OCI-LY7 (cell line): ENCODE measurements at regions of chr7 and their contacts with region 1.

Region 1: GRCh38 chr7:130069978-130070860 is at the start of gene KLHDC10:
- DNase-seq: peak; percentile 97
- H3K4me3 ChIP-seq: peak within 1 kb of the TSS; percentile 83
- H3K27ac ChIP-seq: peak within 1 kb of the TSS; percentile 19
- H3K4me1 ChIP-seq: peaks cover 15% of the 10 kb centered on the region
- CTCF ChIP-seq: no peak
- total RNA-seq, gene KLHDC10: 15.9 and 24.1 TPM in 2 replicates

Region 2: GRCh38 chr7:130149281-130150139 is 79.3 kb after region 1 on chr7:
- CTCF ChIA-PET with region 1: no interaction called
- POLR2A ChIA-PET with region 1: no interaction called
- intact Hi-C with region 1: loop called (anchors 2 kb)
- DNase-seq: peak; percentile 31
- H3K4me3 ChIP-seq: no peak overlapping the region
- H3K27ac ChIP-seq: peak overlapping the region; percentile 34
- H3K4me1 ChIP-seq: peaks cover 32% of the 10 kb centered on the region
- CTCF ChIP-seq: no peak

Region 3: DNA sequence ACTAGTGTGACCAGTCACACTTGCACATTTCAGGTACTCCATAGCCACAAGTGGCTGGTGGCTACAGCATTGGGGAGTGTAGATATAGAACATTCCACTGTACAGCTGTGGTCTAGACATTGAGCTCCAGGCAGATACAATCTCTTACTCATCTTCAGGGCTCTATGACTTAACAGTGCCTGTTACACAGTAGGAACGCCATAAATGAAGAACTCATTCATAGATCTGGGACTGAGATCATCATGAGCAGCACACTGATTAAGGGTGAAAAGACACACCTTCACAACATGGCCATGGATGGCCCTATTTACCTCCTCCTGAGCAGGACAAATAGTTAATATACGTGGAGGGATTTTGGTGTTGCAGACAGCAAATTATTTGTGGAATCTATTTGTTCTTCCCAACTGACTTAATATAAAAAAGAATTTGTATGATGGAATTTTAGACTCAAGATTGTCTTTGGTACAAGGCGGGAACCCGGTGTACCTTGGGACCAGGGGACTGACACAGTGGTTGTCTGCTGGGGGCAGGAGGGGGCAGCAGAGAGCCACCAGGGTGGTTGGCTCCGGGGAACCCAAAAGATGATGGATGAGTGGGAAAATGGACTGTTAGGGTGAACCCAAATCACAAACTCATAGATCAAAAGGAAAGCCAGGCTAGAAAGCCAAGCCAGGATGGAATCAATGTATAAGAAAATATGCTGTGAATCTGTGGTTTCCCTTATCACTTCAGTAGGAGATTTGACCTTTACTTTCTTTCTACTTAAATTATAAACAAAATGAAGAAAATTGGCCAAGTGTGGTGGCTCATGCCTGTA is 172.2 kb after region 1 on chr7:
- CTCF ChIA-PET with region 1: no interaction called
- POLR2A ChIA-PET with region 1: no interaction called
- intact Hi-C with region 1: loop called (anchors 1 kb)
- DNase-seq: peak; percentile 33
- H3K4me3 ChIP-seq: no peak overlapping the region
- H3K27ac ChIP-seq: no peak overlapping the region
- H3K4me1 ChIP-seq: no peaks in the 10 kb centered on the region
- CTCF ChIP-seq: peak; percentile 94

Region 4: DNA sequence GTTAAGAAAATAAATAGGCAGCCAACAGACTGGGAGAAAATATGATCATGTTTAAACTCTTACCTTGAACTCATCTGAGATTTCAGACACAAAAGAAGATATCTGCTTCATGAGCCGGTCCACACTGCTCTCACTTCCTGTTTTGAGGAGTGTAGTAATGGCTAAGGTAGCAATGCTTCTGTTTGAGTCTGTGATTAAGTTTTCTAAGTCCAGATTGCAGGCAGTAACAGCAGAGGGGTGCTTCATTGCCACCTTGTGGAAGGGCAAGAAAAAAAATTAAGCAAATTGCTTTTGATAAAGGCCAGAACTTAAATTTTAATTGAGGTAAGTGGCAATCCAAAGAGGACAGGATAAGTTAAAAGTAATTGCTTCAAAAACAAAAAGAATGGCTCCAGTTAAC is 490.8 kb after region 1 on chr7:
- CTCF ChIA-PET with region 1: no interaction called
- POLR2A ChIA-PET with region 1: no interaction called
- intact Hi-C with region 1: loop called (anchors 5 kb)
- DNase-seq: peak; percentile 66
- H3K4me3 ChIP-seq: no peak overlapping the region
- H3K27ac ChIP-seq: no peak overlapping the region
- H3K4me1 ChIP-seq: no peaks in the 10 kb centered on the region
- CTCF ChIP-seq: peak; percentile 75

Region 5: GRCh38 chr7:130831817-130832481 is 761.7 kb after region 1 on chr7:
- CTCF ChIA-PET with region 1: no interaction called
- POLR2A ChIA-PET with region 1: no interaction called
- intact Hi-C with region 1: loop called (anchors 5 kb)
- DNase-seq: peak; percentile 54
- H3K4me3 ChIP-seq: no peak overlapping the region
- H3K27ac ChIP-seq: no peak overlapping the region
- H3K4me1 ChIP-seq: no peaks in the 10 kb centered on the region
- CTCF ChIP-seq: peak; percentile 97